Thyroid gland (tissue), 4 donors: ENCODE measurements at regions of chr1 and their contacts with region 1.

Region 1: DNA sequence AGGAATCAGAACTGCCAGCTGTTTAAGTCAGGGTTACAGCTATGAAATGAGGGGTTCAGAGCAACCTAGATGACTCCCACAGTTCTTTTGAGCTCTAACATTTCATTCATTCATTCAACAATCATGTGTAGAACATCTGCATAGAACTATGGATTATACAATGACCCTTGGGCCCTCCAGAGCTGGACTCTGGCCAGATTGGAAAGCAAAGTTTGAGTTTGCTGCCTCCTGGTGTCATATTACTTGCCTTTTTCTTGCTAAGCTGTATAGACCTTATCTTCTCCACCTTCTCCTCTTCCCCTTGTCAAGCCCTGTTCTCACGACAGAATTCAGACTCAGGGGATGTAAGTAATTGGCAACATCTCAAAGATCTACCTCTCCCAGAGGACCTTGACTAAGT is 4.0 kb downstream of the CASQ2 start:
- DNase-seq: peak; percentile 41 to 55
- H3K4me3 ChIP-seq: no peak overlapping the region
- H3K27ac ChIP-seq: peak overlapping the region in 2 of 3 donors; percentile 11 to 35
- H3K4me1 ChIP-seq: peaks cover 12 to 19% of the 10 kb centered on the region in 2 donors
- H3K27me3 ChIP-seq: no peaks in the 10 kb centered on the region
- CTCF ChIP-seq: peak in 4 of 6 experiments; percentile 56 to 74 (median 66)
- POLR2A ChIP-seq: no peak

Region 2: GRCh38 chr1:115138968-115139367 is 625.6 kb before region 1 on chr1:
- intact Hi-C with region 1: loop called (anchors 10 kb)
- DNase-seq: peak; percentile 92 to 93
- H3K4me3 ChIP-seq: no peak overlapping the region
- H3K27ac ChIP-seq: no peak overlapping the region
- H3K4me1 ChIP-seq: peaks cover 0 to 4% of the 10 kb centered on the region in 2 donors
- H3K27me3 ChIP-seq: no peaks in the 10 kb centered on the region
- CTCF ChIP-seq: peak; percentile 63 to 94 (median 84)
- POLR2A ChIP-seq: no peak

Region 3: GRCh38 chr1:115613767-115614166 is 150.8 kb before region 1 on chr1:
- intact Hi-C with region 1: loop called (anchors 10 kb)
- DNase-seq: no peak
- H3K4me3 ChIP-seq: no peak overlapping the region
- H3K27ac ChIP-seq: no peak overlapping the region
- H3K4me1 ChIP-seq: no peaks in the 10 kb centered on the region
- H3K27me3 ChIP-seq: no peaks in the 10 kb centered on the region
- CTCF ChIP-seq: no peak
- POLR2A ChIP-seq: no peak

Region 4: GRCh38 chr1:115722221-115722620 is 42.3 kb before region 1 on chr1:
- intact Hi-C with region 1: loop called (anchors 5 kb)
- DNase-seq: no peak
- H3K4me3 ChIP-seq: no peak overlapping the region
- H3K27ac ChIP-seq: no peak overlapping the region
- H3K4me1 ChIP-seq: peaks cover 24 to 30% of the 10 kb centered on the region in 2 donors
- H3K27me3 ChIP-seq: no peaks in the 10 kb centered on the region
- CTCF ChIP-seq: no peak
- POLR2A ChIP-seq: no peak

Region 5: GRCh38 chr1:115807723-115808122 is 43.2 kb after region 1 on chr1:
- intact Hi-C with region 1: no loop called
- DNase-seq: peak; percentile 57
- H3K4me3 ChIP-seq: no peak overlapping the region
- H3K27ac ChIP-seq: no peak overlapping the region
- H3K4me1 ChIP-seq: no peaks in the 10 kb centered on the region
- H3K27me3 ChIP-seq: no peaks in the 10 kb centered on the region
- CTCF ChIP-seq: peak; percentile 39 to 70 (median 58)
- POLR2A ChIP-seq: no peak